ENCODE measurements at regions of chr11 and their contacts with region 1.

Region 1: GRCh38 chr11:46889689-46890475 is 28.5 kb downstream of the LRP4 start:
- DNase-seq: peak; percentile 85
- ATAC-seq: peak; percentile 98
- H3K4me3 ChIP-seq: no peak overlapping the region
- H3K4me3 Mint-ChIP-seq: no peak overlapping the region
- H3K27ac ChIP-seq: no peak overlapping the region
- H3K27ac Mint-ChIP-seq: no peak overlapping the region
- H3K4me1 ChIP-seq: peaks cover 0 to 7% of the 10 kb centered on the region in 2 donors
- H3K4me1 Mint-ChIP-seq: peaks cover 5% of the 10 kb centered on the region
- H3K27me3 ChIP-seq: peaks cover 0 to 2% (median 0%) of the 10 kb centered on the region in 4 experiments
- H3K27me3 Mint-ChIP-seq: peaks cover 6% of the 10 kb centered on the region
- CTCF ChIP-seq: peak; percentile 86

Region 2: DNA sequence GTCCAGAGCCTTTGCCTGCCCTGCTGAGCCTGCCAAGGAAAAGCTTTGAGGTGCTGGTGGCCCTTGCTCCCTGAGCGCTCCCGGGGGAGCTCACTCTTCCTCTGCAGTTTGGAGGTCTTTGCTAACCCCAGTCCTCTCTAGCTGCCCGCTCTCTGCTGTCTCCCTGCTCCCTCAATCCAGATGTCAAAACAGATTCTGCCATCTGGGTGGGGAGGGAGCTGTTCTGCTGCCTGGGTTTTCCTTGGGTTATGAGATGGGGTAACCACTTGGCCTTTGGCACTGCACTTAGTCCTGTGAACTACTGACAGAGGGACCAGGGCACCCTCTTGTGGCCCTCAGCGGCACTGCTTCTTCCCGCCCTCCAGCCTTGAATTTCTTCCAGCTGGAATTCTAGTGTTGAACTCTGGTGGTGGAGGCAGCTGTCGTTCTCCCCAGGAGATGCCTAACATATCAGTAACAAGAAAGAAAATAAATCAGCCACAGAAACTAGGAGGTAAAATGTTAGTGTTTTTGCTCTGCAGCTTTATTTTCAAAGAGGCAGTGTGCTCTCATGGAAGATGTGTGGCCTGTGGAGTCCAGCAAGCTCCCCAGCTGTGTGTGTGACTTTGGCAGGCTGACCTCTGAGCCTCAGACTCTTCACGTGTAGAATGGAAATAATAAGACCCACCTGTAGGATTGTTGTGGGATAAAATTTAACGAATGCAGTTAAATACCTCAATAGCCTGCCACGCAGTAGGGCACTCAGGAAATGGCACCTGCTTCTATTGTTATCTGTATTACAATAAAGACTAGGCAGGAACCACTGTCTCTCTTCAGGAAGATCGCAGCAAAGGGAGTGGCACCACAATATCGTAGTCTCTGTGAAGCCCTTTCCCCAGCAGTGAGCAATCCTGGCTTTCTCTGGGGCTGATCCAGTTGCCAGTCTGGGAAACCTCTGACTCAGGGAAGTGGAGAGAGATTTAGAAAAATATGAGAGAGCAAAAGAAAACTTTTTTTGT is 263.4 kb after region 1 on chr11:
- CTCF ChIA-PET with region 1: interaction called, 35 read pairs
- POLR2A ChIA-PET with region 1: interaction called, 7 read pairs
- intact Hi-C with region 1: no loop called
- DNase-seq: peak; percentile 67
- ATAC-seq: peak; percentile 61
- H3K4me3 ChIP-seq: no peak overlapping the region
- H3K4me3 Mint-ChIP-seq: peak overlapping the region; percentile 14
- H3K27ac ChIP-seq: no peak overlapping the region
- H3K27ac Mint-ChIP-seq: no peak overlapping the region
- H3K4me1 ChIP-seq: peaks cover 19 to 36% of the 10 kb centered on the region in 2 donors
- H3K4me1 Mint-ChIP-seq: peaks cover 35% of the 10 kb centered on the region
- H3K27me3 ChIP-seq: no peaks in the 10 kb centered on the region
- H3K27me3 Mint-ChIP-seq: no peaks in the 10 kb centered on the region
- CTCF ChIP-seq: peak; percentile 84

Region 3: GRCh38 chr11:47161134-47161854 is 271.4 kb after region 1 on chr11:
- CTCF ChIA-PET with region 1: interaction called, 35 read pairs
- POLR2A ChIA-PET with region 1: no interaction called
- intact Hi-C with region 1: loop called (anchors 1 kb)
- DNase-seq: peak; percentile 74
- ATAC-seq: peak; percentile 74
- H3K4me3 ChIP-seq: no peak overlapping the region
- H3K4me3 Mint-ChIP-seq: no peak overlapping the region
- H3K27ac ChIP-seq: no peak overlapping the region
- H3K27ac Mint-ChIP-seq: no peak overlapping the region
- H3K4me1 ChIP-seq: peaks cover 0 to 2% of the 10 kb centered on the region in 2 donors
- H3K4me1 Mint-ChIP-seq: peaks cover 1% of the 10 kb centered on the region
- H3K27me3 ChIP-seq: no peaks in the 10 kb centered on the region
- H3K27me3 Mint-ChIP-seq: no peaks in the 10 kb centered on the region
- CTCF ChIP-seq: peak; percentile 74

Region 4: GRCh38 chr11:47454180-47454644 is 564.3 kb after region 1 on chr11:
- CTCF ChIA-PET with region 1: interaction called, 11 read pairs
- POLR2A ChIA-PET with region 1: no interaction called
- intact Hi-C with region 1: no loop called
- DNase-seq: peak; percentile 85
- ATAC-seq: peak; percentile 94
- H3K4me3 ChIP-seq: no peak overlapping the region
- H3K4me3 Mint-ChIP-seq: no peak overlapping the region
- H3K27ac ChIP-seq: no peak overlapping the region
- H3K27ac Mint-ChIP-seq: no peak overlapping the region
- H3K4me1 ChIP-seq: peaks cover 0 to 5% of the 10 kb centered on the region in 2 donors
- H3K4me1 Mint-ChIP-seq: peaks cover 4% of the 10 kb centered on the region
- H3K27me3 ChIP-seq: no peaks in the 10 kb centered on the region
- H3K27me3 Mint-ChIP-seq: no peaks in the 10 kb centered on the region
- CTCF ChIP-seq: peak; percentile 83

Measured in B cell (primary cell).